Stomach (tissue), 19 donors: ENCODE measurements at regions of chr1 and their contacts with region 1.

Region 1: DNA sequence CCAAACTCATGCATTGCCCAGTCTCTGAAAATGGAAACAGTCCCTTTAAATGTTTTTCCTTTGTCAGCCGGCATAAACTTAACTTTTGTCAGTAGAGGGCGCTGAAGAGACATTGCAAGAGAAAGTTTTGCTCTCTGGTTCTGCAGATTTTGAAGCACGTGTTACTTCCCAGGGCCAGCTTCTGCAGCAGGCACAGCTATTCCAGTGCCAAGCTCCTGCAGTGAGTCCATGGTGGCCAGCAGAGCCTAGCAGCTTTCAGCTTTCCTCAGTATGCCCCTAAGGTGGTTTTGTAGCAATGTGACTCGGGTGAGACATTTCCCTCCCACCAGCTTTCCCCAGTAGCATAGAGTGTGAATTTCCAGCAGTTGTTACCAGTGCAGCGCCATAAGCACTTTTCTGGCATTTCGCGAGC is 2.6 kb upstream of the IFI44L start:
- DNase-seq: peak; percentile 62 to 93
- H3K4me3 ChIP-seq: no peak overlapping the region
- H3K27ac ChIP-seq: peak overlapping the region in 2 of 5 donors; percentile 40 to 43
- H3K4me1 ChIP-seq: peaks cover 8 to 42% (median 34%) of the 10 kb centered on the region in 4 donors
- H3K27me3 ChIP-seq: no peaks in the 10 kb centered on the region
- CTCF ChIP-seq: peak in 5 of 7 experiments; percentile 71 to 89 (median 77)
- EP300 ChIP-seq: no peak
- POLR2A ChIP-seq: no peak

Region 2: GRCh38 chr1:78143152-78143551 is 474.5 kb before region 1 on chr1:
- intact Hi-C with region 1: loop called (anchors 5 kb)
- DNase-seq: no peak
- H3K4me3 ChIP-seq: peak overlapping the region in 1 of 4 donors; percentile 3
- H3K27ac ChIP-seq: no peak overlapping the region
- H3K4me1 ChIP-seq: peaks cover 0 to 12% (median 8%) of the 10 kb centered on the region in 4 donors
- H3K27me3 ChIP-seq: no peaks in the 10 kb centered on the region
- CTCF ChIP-seq: no peak
- EP300 ChIP-seq: no peak
- POLR2A ChIP-seq: no peak

Region 3: DNA sequence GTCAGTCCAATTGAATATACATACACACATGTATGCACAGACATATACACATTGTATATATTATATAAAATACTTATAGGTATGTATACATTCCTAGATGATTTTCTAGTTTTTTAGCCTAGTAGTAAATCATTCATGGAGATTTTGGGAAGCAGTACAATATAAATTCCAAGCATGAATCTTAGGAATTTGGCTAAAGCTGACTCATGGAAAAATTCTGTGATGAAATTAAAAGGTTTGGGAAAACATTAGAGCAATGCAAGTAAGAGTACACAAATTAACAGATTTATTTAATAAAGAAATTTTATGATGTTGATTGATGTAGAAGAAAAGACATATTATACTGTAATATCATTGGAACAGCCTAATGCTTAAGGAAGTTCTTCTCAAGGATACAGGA is 170.5 kb before region 1 on chr1:
- intact Hi-C with region 1: no loop called
- DNase-seq: no peak
- H3K4me3 ChIP-seq: no peak overlapping the region
- H3K27ac ChIP-seq: no peak overlapping the region
- H3K4me1 ChIP-seq: no peaks in the 10 kb centered on the region
- H3K27me3 ChIP-seq: no peaks in the 10 kb centered on the region
- CTCF ChIP-seq: no peak
- EP300 ChIP-seq: no peak
- POLR2A ChIP-seq: no peak

Region 4: GRCh38 chr1:78737241-78737640 is 119.6 kb after region 1 on chr1:
- intact Hi-C with region 1: no loop called
- DNase-seq: no peak
- H3K4me3 ChIP-seq: no peak overlapping the region
- H3K27ac ChIP-seq: no peak overlapping the region
- H3K4me1 ChIP-seq: no peaks in the 10 kb centered on the region
- H3K27me3 ChIP-seq: no peaks in the 10 kb centered on the region
- CTCF ChIP-seq: no peak
- EP300 ChIP-seq: no peak
- POLR2A ChIP-seq: no peak

Region 5: DNA sequence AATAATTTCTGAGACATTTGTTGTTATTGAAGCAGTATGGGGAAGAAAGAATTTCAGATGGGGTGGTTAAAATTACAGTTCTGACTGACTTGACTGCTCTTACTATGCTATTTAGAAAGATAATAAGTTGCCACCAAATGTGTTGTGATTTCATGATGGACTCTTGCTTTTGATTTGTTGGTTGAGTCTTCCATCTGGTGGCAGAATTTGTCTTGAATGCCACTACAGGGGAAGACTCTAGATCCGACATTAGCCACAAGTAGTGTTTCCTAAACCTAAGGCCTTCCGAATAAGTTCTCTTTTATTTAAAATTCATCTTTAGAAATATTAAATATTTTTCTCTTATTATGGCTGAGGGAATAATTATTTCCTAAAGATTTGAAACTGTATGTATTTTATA is 579.8 kb after region 1 on chr1:
- intact Hi-C with region 1: no loop called
- DNase-seq: peak in 1 of 2 donors; percentile 32
- H3K4me3 ChIP-seq: no peak overlapping the region
- H3K27ac ChIP-seq: no peak overlapping the region
- H3K4me1 ChIP-seq: peaks cover 0 to 3% (median 0%) of the 10 kb centered on the region in 4 donors
- H3K27me3 ChIP-seq: no peaks in the 10 kb centered on the region
- CTCF ChIP-seq: peak in 1 of 7 experiments; percentile 23
- EP300 ChIP-seq: no peak
- POLR2A ChIP-seq: no peak